H1 (cell line): ENCODE measurements at regions of chr15 and their contacts with region 1.

Region 1: GRCh38 chr15:92305343-92305742 is 88.3 kb upstream of the ST8SIA2 start:
- DNase-seq: no peak
- H3K4me3 ChIP-seq: no peak overlapping the region
- H3K27ac ChIP-seq: no peak overlapping the region
- H3K4me1 ChIP-seq: peaks cover 3 to 23% (median 16%) of the 10 kb centered on the region in 4 experiments
- H3K27me3 ChIP-seq: no peaks in the 10 kb centered on the region; a peak in 2 of 7 replicates
- CTCF ChIP-seq: no peak
- EP300 ChIP-seq: no peak
- POLR2A ChIP-seq: no peak
- RAD21 ChIP-seq: no peak

Region 2: GRCh38 chr15:92205255-92205739 is 100.0 kb before region 1 on chr15:
- CTCF ChIA-PET with region 1: no interaction called
- POLR2A ChIA-PET with region 1: no interaction called
- DNase-seq: peak in 1 of 2 experiments; percentile 50
- H3K4me3 ChIP-seq: no peak overlapping the region
- H3K27ac ChIP-seq: no peak overlapping the region
- H3K4me1 ChIP-seq: peaks cover 2 to 9% (median 5%) of the 10 kb centered on the region in 4 experiments; a peak in 5 of 7 replicates
- H3K27me3 ChIP-seq: no peaks in the 10 kb centered on the region
- CTCF ChIP-seq: peak in 2 of 3 experiments; percentile 52 to 63; a peak in 3 of 4 replicates
- EP300 ChIP-seq: no peak
- POLR2A ChIP-seq: no peak
- RAD21 ChIP-seq: peak; percentile 64 to 73

Region 3: GRCh38 chr15:92277776-92278175 is 27.6 kb before region 1 on chr15:
- CTCF ChIA-PET with region 1: interaction called, 11 read pairs
- POLR2A ChIA-PET with region 1: no interaction called
- DNase-seq: no peak
- H3K4me3 ChIP-seq: no peak overlapping the region
- H3K27ac ChIP-seq: no peak overlapping the region
- H3K4me1 ChIP-seq: no peaks in the 10 kb centered on the region
- H3K27me3 ChIP-seq: no peaks in the 10 kb centered on the region
- CTCF ChIP-seq: peak in 2 of 3 experiments; percentile 55 to 60; a peak in 3 of 4 replicates
- EP300 ChIP-seq: no peak
- POLR2A ChIP-seq: no peak
- RAD21 ChIP-seq: peak; percentile 47 to 65

Region 4: GRCh38 chr15:92499731-92500530 is 194.6 kb after region 1 on chr15:
- CTCF ChIA-PET with region 1: no interaction called
- POLR2A ChIA-PET with region 1: no interaction called
- DNase-seq: peak in 1 of 2 experiments; percentile 32
- H3K4me3 ChIP-seq: no peak overlapping the region
- H3K27ac ChIP-seq: no peak overlapping the region
- H3K4me1 ChIP-seq: peaks cover 0 to 3% (median 0%) of the 10 kb centered on the region in 4 experiments; a peak in 1 of 7 replicates
- H3K27me3 ChIP-seq: peaks cover 0 to 7% (median 3%) of the 10 kb centered on the region in 4 experiments; a peak in 3 of 7 replicates
- CTCF ChIP-seq: no peak
- EP300 ChIP-seq: no peak
- POLR2A ChIP-seq: no peak
- RAD21 ChIP-seq: no peak